PC-3 (cell line): ENCODE measurements at regions of chr10 and their contacts with region 1.

Region 1: GRCh38 chr10:119028900-119029612 is 458 bp upstream of the NANOS1 start:
- DNase-seq: peak; percentile 83
- ATAC-seq: peak; percentile 61
- H3K4me3 ChIP-seq: peak overlapping the region; percentile 24; the same call in 1 of the 2 replicates
- H3K27ac ChIP-seq: no peak overlapping the region
- H3K4me1 ChIP-seq: peaks cover 35% of the 10 kb centered on the region
- H3K27me3 ChIP-seq: no peaks in the 10 kb centered on the region
- CTCF ChIP-seq: no peak

Region 2: DNA sequence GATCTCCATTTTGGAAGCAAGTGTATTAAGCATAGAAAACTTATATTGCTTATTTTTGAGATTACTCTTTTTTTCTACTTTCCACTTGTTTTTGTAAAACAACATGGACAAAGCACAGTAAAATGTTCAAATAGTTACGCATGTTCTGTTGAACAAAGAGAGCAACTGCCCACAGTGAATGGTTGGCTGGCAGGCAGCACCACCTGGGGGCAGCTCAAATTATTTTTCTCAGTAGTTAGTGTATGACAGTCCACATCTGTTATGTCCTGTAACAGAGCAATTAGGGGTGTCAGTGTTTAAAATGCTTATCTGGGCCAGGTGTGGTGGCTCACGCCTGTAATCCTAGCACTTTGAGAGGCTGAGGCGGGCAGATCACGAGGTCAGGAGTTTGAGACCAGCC is 228.1 kb before region 1 on chr10:
- CTCF ChIA-PET with region 1: no interaction called
- POLR2A ChIA-PET with region 1: no interaction called
- intact Hi-C with region 1: loop called (anchors 10 kb)
- DNase-seq: peak; percentile 41
- ATAC-seq: peak; percentile 69; the same call in 1 of the 2 replicates
- H3K4me3 ChIP-seq: no peak overlapping the region
- H3K27ac ChIP-seq: no peak overlapping the region
- H3K4me1 ChIP-seq: peaks cover 21% of the 10 kb centered on the region
- H3K27me3 ChIP-seq: no peaks in the 10 kb centered on the region
- CTCF ChIP-seq: peak; percentile 66

Region 3: GRCh38 chr10:118840071-118840775 is 188.8 kb before region 1 on chr10:
- CTCF ChIA-PET with region 1: no interaction called
- POLR2A ChIA-PET with region 1: no interaction called
- intact Hi-C with region 1: loop called (anchors 10 kb)
- DNase-seq: peak; percentile 80
- ATAC-seq: peak; percentile 58
- H3K4me3 ChIP-seq: no peak overlapping the region
- H3K27ac ChIP-seq: peak overlapping the region; percentile 56
- H3K4me1 ChIP-seq: peaks cover 42% of the 10 kb centered on the region
- H3K27me3 ChIP-seq: no peaks in the 10 kb centered on the region
- CTCF ChIP-seq: no peak

Region 4: GRCh38 chr10:118922226-118922625 is 106.8 kb before region 1 on chr10:
- CTCF ChIA-PET with region 1: no interaction called
- POLR2A ChIA-PET with region 1: no interaction called
- intact Hi-C with region 1: no loop called
- DNase-seq: peak; percentile 51
- ATAC-seq: peak; percentile 40; the same call in 1 of the 2 replicates
- H3K4me3 ChIP-seq: no peak overlapping the region
- H3K27ac ChIP-seq: no peak overlapping the region
- H3K4me1 ChIP-seq: peaks cover 15% of the 10 kb centered on the region
- H3K27me3 ChIP-seq: no peaks in the 10 kb centered on the region
- CTCF ChIP-seq: no peak

Region 5: DNA sequence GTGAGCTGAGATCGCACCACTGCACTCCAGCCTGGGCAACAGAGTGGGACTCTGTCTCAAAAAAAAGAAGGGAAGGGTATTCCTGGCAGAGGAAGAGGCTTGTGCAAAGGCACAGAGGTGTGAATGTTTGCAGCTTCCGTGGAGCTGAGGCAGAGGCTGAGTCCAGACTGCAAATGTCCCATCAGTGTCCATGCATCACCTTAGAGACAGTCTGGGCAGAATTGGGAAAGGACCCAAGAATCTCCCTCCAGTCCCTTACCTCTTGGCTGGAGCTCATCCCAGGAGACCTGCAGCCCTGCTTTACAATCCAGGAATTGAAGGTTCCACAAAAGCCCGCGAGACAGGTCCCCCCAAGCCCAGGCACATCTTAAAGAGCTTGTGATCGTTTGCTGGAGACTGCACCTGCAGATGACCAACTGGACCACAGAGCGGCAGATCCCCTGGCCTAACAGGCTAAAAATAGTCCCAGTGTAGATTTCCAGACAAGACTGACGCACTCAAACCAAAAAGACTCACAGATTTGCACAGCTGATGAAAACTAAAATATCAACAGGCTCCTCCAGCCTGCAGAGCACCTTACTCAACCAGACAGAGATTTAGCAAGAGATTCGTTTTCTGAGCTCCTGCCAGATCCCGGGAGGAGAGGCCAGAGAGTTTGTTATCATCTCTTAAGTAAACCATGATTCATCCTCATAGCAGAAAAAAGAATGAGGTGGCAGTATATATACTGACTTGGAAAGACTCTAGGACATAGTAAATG is 22.4 kb before region 1 on chr10:
- CTCF ChIA-PET with region 1: no interaction called
- POLR2A ChIA-PET with region 1: no interaction called
- intact Hi-C with region 1: loop called (anchors 2 kb)
- DNase-seq: peak; percentile 98
- ATAC-seq: peak; percentile 86
- H3K4me3 ChIP-seq: no peak overlapping the region; the same call in 1 of the 2 replicates
- H3K27ac ChIP-seq: peak overlapping the region; percentile 74
- H3K4me1 ChIP-seq: peaks cover 27% of the 10 kb centered on the region
- H3K27me3 ChIP-seq: no peaks in the 10 kb centered on the region
- CTCF ChIP-seq: no peak

Region 6: DNA sequence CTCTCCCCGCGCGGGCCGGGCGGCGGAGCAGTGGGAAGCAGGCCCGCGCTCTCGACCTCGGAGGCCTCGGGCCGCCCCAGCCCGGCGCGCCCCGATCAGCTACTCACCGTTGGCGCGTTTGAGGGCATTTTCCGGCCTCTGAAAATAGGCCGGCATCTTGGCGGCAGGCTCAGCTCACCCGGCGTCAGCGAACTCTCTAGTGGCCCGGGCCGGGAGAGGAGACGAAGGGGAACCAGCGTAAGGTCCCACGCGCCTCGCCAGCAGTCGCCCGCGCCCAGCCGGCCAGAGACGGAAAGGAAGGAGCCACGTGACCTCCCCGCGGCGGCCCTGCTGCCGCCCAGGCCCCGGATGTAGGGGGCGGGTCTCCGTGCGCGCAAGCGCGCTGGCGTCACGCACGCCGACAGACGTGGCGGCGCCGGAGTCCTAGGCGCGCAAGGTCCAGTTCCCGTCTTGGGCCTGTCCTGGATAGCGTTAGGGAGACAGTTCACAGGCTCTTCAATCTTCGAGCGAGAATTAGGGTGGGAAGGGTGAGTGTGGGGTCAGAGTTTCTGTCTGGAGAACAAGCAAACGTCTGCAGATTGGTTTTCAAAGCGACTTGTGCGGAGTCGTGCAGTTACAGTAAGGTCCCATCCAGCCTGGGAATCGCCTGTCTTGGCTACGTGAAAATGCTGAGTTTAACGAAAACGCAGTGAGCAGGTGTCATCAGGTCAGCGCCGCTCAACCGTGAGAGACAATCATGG is 51.6 kb after region 1 on chr10 and contains the start of gene EIF3A:
- CTCF ChIA-PET with region 1: no interaction called
- POLR2A ChIA-PET with region 1: interaction called, 3 read pairs
- intact Hi-C with region 1: loop called (anchors 5 kb)
- DNase-seq: peak; percentile 88
- ATAC-seq: peak; percentile 90
- H3K4me3 ChIP-seq: peak within 1 kb of the TSS; percentile 100
- H3K27ac ChIP-seq: peak within 1 kb of the TSS; percentile 80
- H3K4me1 ChIP-seq: peaks cover 11% of the 10 kb centered on the region
- H3K27me3 ChIP-seq: no peaks in the 10 kb centered on the region
- CTCF ChIP-seq: no peak
- total RNA-seq, gene EIF3A: 46.0 and 56.3 TPM in 2 replicates